MCF 10A (cell line): ENCODE measurements at regions of chr1 and their contacts with region 1.

Region 1: GRCh38 chr1:209565759-209566678 is 17.5 kb upstream of the CAMK1G start:
- DNase-seq: peak; percentile 97
- H3K4me3 Mint-ChIP-seq: peak overlapping the region; percentile 49
- H3K27ac Mint-ChIP-seq: no peak overlapping the region
- H3K4me1 Mint-ChIP-seq: peaks cover 62% of the 10 kb centered on the region
- H3K27me3 Mint-ChIP-seq: peaks cover 3% of the 10 kb centered on the region
- CTCF ChIP-seq: peak; percentile 98

Region 2: DNA sequence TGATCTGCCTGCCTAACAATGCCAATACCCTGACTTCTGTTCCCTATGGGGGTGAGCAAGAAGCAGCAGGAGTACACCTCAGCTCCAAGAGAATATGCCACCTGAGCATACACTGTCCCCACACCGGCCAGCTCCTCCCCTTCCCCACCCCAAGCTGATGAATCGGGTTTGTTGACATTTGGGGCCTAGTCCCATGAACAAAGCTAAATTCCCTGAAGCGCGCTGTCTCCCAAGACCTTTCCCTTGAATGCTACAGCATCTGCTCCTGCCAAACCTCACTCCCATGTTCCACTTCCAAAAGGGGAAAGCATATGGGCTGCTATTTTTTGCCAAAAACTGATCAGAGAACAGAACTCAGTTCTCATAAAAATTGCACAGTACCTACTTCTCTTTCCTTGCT is 202.9 kb before region 1 on chr1:
- CTCF ChIA-PET with region 1: interaction called, 20 read pairs
- POLR2A ChIA-PET with region 1: interaction called, 11 read pairs
- intact Hi-C with region 1: no loop called
- DNase-seq: no peak
- H3K4me3 Mint-ChIP-seq: no peak overlapping the region
- H3K27ac Mint-ChIP-seq: peak overlapping the region; percentile 88
- H3K4me1 Mint-ChIP-seq: peaks cover 60% of the 10 kb centered on the region
- H3K27me3 Mint-ChIP-seq: no peaks in the 10 kb centered on the region
- CTCF ChIP-seq: no peak

Region 3: GRCh38 chr1:209428241-209428921 is 137.6 kb before region 1 on chr1:
- CTCF ChIA-PET with region 1: interaction called, 105 read pairs
- POLR2A ChIA-PET with region 1: interaction called, 174 read pairs
- intact Hi-C with region 1: no loop called
- DNase-seq: peak; percentile 99
- H3K4me3 Mint-ChIP-seq: peak overlapping the region; percentile 93
- H3K27ac Mint-ChIP-seq: peak overlapping the region; percentile 90
- H3K4me1 Mint-ChIP-seq: peaks cover 60% of the 10 kb centered on the region
- H3K27me3 Mint-ChIP-seq: no peaks in the 10 kb centered on the region
- CTCF ChIP-seq: no peak

Region 4: GRCh38 chr1:209505044-209505443 is 61.0 kb before region 1 on chr1:
- CTCF ChIA-PET with region 1: interaction called, 198 read pairs
- POLR2A ChIA-PET with region 1: interaction called, 5 read pairs
- intact Hi-C with region 1: no loop called
- DNase-seq: no peak
- H3K4me3 Mint-ChIP-seq: no peak overlapping the region
- H3K27ac Mint-ChIP-seq: no peak overlapping the region
- H3K4me1 Mint-ChIP-seq: no peaks in the 10 kb centered on the region
- H3K27me3 Mint-ChIP-seq: no peaks in the 10 kb centered on the region
- CTCF ChIP-seq: no peak

Region 5: DNA sequence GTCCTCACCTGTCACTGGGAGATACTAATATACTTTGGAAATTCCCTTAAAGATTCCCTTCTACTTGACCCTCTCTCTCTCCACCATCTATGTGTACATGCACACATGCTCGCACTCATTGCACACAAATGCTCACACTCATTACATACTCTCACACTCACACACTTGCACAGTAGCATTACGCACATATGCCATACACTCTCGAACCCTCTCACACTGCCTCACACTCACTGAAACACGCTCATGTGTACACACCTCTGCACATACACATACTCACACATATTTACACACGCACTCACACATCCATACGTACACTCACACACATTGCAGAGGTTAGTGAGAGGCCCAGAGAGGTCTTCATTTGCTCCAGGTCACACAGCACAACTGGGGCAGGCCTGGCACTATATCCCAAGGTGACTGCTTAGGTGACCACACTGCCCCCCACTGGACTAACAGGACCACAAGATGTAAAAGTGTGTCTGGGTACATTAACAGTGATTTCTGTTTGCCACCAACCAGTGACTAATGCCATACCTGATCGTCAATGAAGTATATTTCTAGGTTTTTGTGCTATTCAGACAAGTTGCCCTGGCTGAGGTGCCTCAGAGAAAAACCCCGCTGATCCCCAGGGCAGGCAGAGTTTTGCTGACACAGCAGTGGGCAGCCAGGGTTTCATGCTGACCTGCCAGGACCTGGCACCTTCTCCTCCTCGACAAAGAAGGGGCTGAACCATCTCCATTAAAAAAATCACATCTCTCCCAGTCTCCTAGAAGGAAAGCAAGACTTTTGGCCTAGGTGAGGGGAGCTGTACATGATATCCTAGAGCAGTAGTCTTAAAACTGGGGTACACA is 11.0 kb before region 1 on chr1:
- CTCF ChIA-PET with region 1: interaction called, 118 read pairs
- POLR2A ChIA-PET with region 1: interaction called, 4 read pairs
- intact Hi-C with region 1: no loop called
- DNase-seq: no peak
- H3K4me3 Mint-ChIP-seq: no peak overlapping the region
- H3K27ac Mint-ChIP-seq: no peak overlapping the region
- H3K4me1 Mint-ChIP-seq: peaks cover 13% of the 10 kb centered on the region
- H3K27me3 Mint-ChIP-seq: no peaks in the 10 kb centered on the region
- CTCF ChIP-seq: peak; percentile 23

Region 6: GRCh38 chr1:209692745-209693504 is 126.9 kb after region 1 on chr1:
- CTCF ChIA-PET with region 1: interaction called, 12 read pairs
- POLR2A ChIA-PET with region 1: interaction called, 7 read pairs
- intact Hi-C with region 1: loop called (anchors 2 kb)
- DNase-seq: peak; percentile 98
- H3K4me3 Mint-ChIP-seq: no peak overlapping the region
- H3K27ac Mint-ChIP-seq: peak overlapping the region; percentile 55
- H3K4me1 Mint-ChIP-seq: peaks cover 64% of the 10 kb centered on the region
- H3K27me3 Mint-ChIP-seq: peaks cover 17% of the 10 kb centered on the region
- CTCF ChIP-seq: peak; percentile 100

Region 7: DNA sequence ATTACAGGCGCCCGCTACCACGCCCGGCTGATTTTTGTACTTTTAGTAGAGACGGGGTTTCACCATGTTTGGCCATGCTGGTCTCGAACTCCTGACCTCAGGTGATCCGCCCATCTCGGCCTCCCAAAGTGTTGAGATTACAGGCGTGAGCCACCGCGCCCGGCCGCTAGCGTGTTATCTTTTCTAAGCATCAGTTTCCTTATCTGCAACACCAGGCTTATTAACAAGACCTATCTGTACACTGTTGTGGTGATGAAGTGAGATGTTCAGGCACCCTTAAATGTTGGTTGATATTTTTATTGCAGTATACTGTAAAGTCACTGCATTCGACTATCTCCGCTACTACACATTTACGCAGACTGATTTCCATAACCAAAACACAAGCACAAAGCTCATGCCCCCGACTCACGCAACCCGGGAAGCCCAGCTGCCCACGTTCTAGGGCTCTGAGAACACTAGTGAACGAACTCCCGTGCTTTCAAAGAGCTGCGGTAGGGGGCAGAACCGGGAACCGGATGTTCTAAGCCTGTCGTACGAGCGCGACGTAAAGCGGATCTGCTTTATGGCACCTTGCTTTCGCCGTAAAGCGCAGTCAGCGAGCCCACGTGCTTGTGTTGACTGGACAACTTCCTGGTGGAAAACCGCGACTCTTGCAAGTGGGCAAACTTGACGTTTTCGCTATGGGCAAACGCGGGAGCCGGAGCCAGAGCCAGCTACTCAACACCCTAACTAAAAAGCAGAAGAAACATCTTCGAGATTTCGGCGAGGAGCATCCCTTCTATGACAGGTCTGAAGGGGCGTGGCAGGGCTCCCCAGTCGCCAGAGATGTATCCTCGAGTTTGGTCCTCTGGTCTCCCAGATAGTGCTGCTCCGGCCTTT is 261.6 kb after region 1 on chr1 and contains the start of gene UTP25:
- CTCF ChIA-PET with region 1: interaction called, 5 read pairs
- POLR2A ChIA-PET with region 1: no interaction called
- intact Hi-C with region 1: loop called (anchors 5 kb)
- DNase-seq: peak; percentile 99
- H3K4me3 Mint-ChIP-seq: peak within 1 kb of the TSS; percentile 92
- H3K27ac Mint-ChIP-seq: peak within 1 kb of the TSS; percentile 89
- H3K4me1 Mint-ChIP-seq: peaks cover 65% of the 10 kb centered on the region
- H3K27me3 Mint-ChIP-seq: no peaks in the 10 kb centered on the region
- CTCF ChIP-seq: peak; percentile 88
- total RNA-seq, gene UTP25: 20.4 and 23.8 TPM in 2 replicates